ENCODE measurements at regions of chr2 and their contacts with region 1.

Region 1: GRCh38 chr2:88067189-88067588 is 436 bp upstream of the SMYD1 start:
- DNase-seq: no peak
- ATAC-seq: no peak
- H3K4me3 ChIP-seq: no peak overlapping the region
- H3K4me3 Mint-ChIP-seq: no peak overlapping the region
- H3K27ac ChIP-seq: no peak overlapping the region
- H3K27ac Mint-ChIP-seq: no peak overlapping the region
- H3K4me1 ChIP-seq: no peaks in the 10 kb centered on the region
- H3K4me1 Mint-ChIP-seq: no peaks in the 10 kb centered on the region
- H3K27me3 ChIP-seq: no peaks in the 10 kb centered on the region
- H3K27me3 Mint-ChIP-seq: no peaks in the 10 kb centered on the region
- CTCF ChIP-seq: no peak

Region 2: GRCh38 chr2:88016086-88016959 is 50.9 kb before region 1 on chr2 and contains the start of gene RNU2-63P:
- CTCF ChIA-PET with region 1: no interaction called
- POLR2A ChIA-PET with region 1: no interaction called
- intact Hi-C with region 1: no loop called
- DNase-seq: peak; percentile 65 to 89 (median 79)
- ATAC-seq: peak; percentile 86
- H3K4me3 ChIP-seq: peak within 1 kb of the TSS; percentile 68 to 92
- H3K4me3 Mint-ChIP-seq: peak within 1 kb of the TSS; percentile 100
- H3K27ac ChIP-seq: peak within 1 kb of the TSS; percentile 89 to 90
- H3K27ac Mint-ChIP-seq: peak within 1 kb of the TSS; percentile 100
- H3K4me1 ChIP-seq: peaks cover 5% of the 10 kb centered on the region
- H3K4me1 Mint-ChIP-seq: peaks cover 22% of the 10 kb centered on the region
- H3K27me3 ChIP-seq: no peaks in the 10 kb centered on the region
- H3K27me3 Mint-ChIP-seq: no peaks in the 10 kb centered on the region
- CTCF ChIP-seq: no peak
- total RNA-seq, gene RNU2-63P: 4.4 to 9.1 TPM

Region 3: GRCh38 chr2:88049622-88050021 is 17.6 kb before region 1 on chr2:
- CTCF ChIA-PET with region 1: interaction called, 10 read pairs
- POLR2A ChIA-PET with region 1: no interaction called
- intact Hi-C with region 1: loop called in 1 of 2 experiments (anchors 2 kb)
- DNase-seq: no peak
- ATAC-seq: no peak
- H3K4me3 ChIP-seq: no peak overlapping the region
- H3K4me3 Mint-ChIP-seq: no peak overlapping the region
- H3K27ac ChIP-seq: no peak overlapping the region
- H3K27ac Mint-ChIP-seq: peak overlapping the region; percentile 30
- H3K4me1 ChIP-seq: peaks cover 14% of the 10 kb centered on the region
- H3K4me1 Mint-ChIP-seq: peaks cover 53% of the 10 kb centered on the region
- H3K27me3 ChIP-seq: no peaks in the 10 kb centered on the region
- H3K27me3 Mint-ChIP-seq: no peaks in the 10 kb centered on the region
- CTCF ChIP-seq: no peak